Dorsolateral prefrontal cortex (tissue), 120 donors: ENCODE measurements at regions of chr10 and their contacts with region 1.

Region 1: GRCh38 chr10:126062131-126062981 is 166.0 kb downstream of the FANK1 start:
- DNase-seq: peak; percentile 12 to 93 (median 85)
- H3K4me3 ChIP-seq: peak overlapping the region in 1 of 59 donors; percentile 12
- H3K27ac ChIP-seq: peak overlapping the region in 41 of 59 donors; percentile 3 to 81 (median 41)
- H3K27me3 ChIP-seq: peaks cover 0 to 10% (median 0%) of the 10 kb centered on the region in 45 donors
- CTCF ChIP-seq: peak in 4 of 56 donors; percentile 11 to 23 (median 18)

Region 2: DNA sequence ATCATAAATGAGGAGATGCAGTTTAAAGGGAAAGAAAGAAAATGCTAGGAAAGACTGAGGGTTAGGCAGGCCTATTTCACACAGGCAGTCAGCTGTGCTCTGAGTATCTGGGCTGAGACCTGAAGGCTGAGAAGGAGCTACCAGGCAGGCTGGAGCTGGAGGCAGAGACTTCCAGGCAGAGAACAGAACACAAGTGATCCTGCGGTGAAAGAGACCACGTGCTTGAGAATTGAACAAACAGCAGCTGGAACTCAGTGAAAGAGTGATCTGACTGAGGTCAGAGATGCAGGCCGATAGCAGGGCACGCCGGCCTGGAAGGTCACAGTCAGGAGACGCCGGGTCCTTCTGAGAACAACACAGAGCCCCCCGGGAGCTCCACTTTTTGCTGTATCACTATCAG is 178.1 kb after region 1 on chr10:
- intact Hi-C with region 1: loop called (anchors 2 to 5 kb)
- DNase-seq: peak in 6 of 10 donors; percentile 40 to 72 (median 62)
- H3K4me3 ChIP-seq: no peak overlapping the region
- H3K27ac ChIP-seq: peak overlapping the region in 57 of 59 donors; percentile 13 to 89 (median 76)
- H3K27me3 ChIP-seq: no peaks in the 10 kb centered on the region
- CTCF ChIP-seq: no peak

Region 3: DNA sequence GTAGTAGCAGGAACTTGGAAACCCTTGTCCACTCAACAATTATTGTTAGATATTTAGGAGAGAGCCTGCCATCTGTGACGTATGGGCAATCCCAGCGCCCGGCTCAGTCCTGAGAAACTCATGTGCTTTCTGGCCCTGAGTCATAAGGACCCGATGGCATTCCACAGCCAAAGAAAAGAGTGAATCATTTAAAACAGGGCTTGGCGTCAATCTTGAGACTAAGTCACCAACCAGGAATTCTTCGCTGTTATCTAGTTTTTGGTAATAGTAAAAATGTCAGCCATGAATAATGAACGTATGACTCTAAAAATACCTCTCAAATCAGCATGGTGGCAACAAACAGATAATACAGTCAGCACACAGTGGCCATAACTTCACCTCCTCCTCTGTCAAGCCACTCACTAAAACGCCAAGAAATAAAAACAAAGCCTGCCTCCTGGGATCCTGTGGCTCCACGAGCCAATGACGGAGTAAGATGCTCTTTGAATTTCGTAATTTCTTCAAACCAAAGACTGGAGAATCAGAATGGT is 185.2 kb after region 1 on chr10:
- intact Hi-C with region 1: loop called in 1 of 2 experiments (anchors 5 kb)
- DNase-seq: no peak
- H3K4me3 ChIP-seq: no peak overlapping the region
- H3K27ac ChIP-seq: peak overlapping the region in 4 of 59 donors; percentile 5 to 61 (median 33)
- H3K27me3 ChIP-seq: no peaks in the 10 kb centered on the region
- CTCF ChIP-seq: no peak

Region 4: DNA sequence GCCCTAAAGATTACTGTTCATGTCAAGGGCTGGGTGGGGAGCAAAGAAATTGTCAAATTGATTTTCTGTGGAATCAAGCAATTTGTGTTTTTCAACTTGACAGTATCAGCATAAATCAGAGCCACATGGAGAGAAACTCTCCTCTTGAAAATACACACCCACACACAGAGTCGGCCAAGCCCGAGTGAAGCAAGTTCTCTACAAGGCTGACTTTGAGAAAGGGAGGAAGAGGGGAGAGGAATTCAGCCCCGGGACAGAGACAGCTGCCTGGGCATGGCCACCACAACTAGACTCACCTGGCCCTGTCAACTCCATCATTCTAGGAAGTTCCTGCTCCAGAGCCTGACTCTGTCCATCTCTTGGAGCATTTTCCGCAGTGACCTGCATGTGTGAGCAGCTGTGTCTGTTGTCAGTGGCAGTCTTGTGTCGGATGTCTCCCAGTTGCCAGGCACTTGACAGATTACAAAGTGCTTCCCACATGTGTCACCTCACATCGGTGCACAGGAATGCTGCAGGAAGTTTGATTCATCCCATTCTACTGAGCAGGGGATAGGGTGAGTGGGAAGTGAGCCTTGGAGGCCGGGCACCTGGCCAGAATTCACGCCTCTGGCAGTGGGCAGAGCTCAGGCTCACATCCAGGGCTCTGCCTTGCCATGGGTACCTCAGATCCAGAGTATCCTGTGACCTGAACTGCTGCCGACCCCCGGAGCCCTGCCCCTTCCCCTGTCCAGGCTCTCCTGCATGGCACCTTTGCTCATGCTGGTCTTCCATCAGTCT is 288.0 kb after region 1 on chr10:
- intact Hi-C with region 1: no loop called
- DNase-seq: peak in 7 of 10 donors; percentile 46 to 71 (median 56)
- H3K4me3 ChIP-seq: no peak overlapping the region
- H3K27ac ChIP-seq: peak overlapping the region in 8 of 59 donors; percentile 2 to 71 (median 32)
- H3K27me3 ChIP-seq: no peaks in the 10 kb centered on the region
- CTCF ChIP-seq: no peak